ENCODE measurements at regions of chr1 and their contacts with region 1.

Region 1: DNA sequence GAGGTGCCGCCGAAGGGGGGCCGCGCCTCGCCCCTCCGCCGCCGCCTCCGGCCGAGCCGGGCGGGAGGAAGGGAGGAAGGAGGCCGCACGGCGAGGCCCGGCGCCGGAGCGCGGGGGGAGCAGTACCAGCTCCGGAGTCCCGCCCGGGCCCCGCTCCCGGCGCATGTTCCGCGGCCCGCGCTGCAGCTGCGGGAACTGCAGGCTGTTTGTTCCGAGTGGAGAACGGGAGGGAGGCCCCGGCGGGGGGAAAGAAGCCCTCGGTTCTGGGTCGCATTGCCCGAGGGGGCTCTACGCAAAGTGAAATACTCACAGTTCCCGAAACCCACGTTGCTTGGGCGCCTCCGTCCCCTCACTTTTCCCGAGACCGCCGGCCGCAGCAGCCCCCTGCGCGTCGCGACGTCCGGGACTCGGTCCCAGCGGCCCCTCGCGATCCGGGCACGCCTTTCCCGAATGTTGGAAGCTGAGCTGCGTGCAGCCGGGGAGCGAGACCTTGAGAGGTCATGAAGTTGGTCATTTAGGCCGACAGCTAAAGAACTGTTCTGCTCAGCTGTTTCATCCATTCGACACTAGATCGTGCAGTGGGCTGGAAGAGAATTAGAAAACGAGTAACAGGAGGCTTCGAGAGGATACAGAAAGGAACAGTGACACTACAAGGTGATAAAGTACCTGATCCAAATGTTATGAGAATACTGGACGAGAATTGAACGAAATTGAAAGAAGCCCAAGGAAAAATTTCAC is 521 bp upstream of the LIN9 start:
- DNase-seq: no peak
- H3K4me3 Mint-ChIP-seq: peak overlapping the region; percentile 75
- H3K27ac Mint-ChIP-seq: peak overlapping the region; percentile 83
- H3K4me1 Mint-ChIP-seq: peaks cover 32% of the 10 kb centered on the region
- H3K27me3 Mint-ChIP-seq: peaks cover 26% of the 10 kb centered on the region

Region 2: DNA sequence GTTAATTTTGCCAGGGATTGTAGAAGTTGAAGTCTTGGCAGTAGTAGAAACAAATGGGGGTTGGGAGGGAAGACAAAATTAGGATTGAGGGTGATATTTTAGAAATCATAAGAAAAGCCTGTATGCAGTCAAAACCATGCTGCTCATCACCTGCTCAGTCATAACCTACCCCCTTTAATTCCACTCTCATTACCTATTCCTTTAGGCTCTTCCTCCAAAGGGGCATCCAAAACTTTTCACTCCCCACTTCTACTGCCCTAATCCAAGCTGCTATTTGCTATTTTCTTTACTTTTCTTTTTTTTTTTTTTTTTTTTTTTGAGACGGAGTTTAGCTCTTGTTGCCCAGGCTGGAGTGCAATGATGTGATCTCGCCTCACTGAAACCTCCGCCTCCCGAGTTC is 235.4 kb before region 1 on chr1:
- CTCF ChIA-PET with region 1: no interaction called
- POLR2A ChIA-PET with region 1: no interaction called
- DNase-seq: no peak
- H3K4me3 Mint-ChIP-seq: no peak overlapping the region
- H3K27ac Mint-ChIP-seq: no peak overlapping the region
- H3K4me1 Mint-ChIP-seq: peaks cover 11% of the 10 kb centered on the region
- H3K27me3 Mint-ChIP-seq: no peaks in the 10 kb centered on the region

Region 3: GRCh38 chr1:226296911-226297310 is 12.6 kb before region 1 on chr1:
- CTCF ChIA-PET with region 1: interaction called, 10 read pairs
- POLR2A ChIA-PET with region 1: no interaction called
- DNase-seq: no peak
- H3K4me3 Mint-ChIP-seq: no peak overlapping the region
- H3K27ac Mint-ChIP-seq: no peak overlapping the region
- H3K4me1 Mint-ChIP-seq: peaks cover 2% of the 10 kb centered on the region
- H3K27me3 Mint-ChIP-seq: no peaks in the 10 kb centered on the region

Region 4: DNA sequence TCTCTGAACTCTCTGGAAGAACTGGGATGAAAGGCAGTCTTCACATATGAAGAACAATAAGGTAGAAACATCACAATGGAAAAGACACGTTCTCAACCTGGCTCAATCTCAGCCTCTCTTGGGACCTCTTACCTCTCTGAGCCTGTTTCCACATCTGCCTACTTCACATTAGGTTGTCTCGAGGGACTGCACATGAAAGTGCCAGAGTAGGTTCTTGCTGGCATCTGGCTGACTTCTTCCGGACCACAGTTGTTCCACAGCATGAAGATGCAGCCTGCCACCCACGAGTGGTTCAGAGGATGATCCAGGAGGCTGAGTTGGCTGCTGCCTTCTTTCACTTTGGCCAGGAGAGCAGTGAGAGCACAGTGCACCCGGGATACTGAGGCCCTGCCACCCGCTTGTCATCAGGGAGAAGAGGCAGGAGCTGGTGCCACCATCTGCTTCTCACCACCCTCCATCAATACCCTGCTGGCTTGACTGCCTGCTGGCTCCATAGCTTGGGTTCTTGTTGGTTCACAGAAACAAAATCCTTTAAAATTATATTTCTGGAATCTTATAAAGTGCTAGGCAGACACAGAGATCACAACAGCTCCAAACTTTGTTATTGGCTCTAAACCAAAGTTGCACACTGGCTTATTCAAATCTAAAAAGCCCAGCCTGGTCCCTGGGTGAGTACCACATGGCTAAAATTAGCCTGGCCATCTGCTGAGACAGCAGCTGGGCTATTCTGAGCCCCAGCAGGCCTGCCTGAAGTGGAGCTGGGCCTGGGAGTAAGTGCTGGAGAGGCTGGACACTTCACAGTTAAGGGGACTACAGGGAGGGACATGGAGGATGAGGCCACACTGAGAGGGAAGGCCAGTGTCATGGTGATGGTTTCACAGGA is 46.4 kb after region 1 on chr1:
- CTCF ChIA-PET with region 1: no interaction called
- POLR2A ChIA-PET with region 1: no interaction called
- DNase-seq: no peak
- H3K4me3 Mint-ChIP-seq: no peak overlapping the region
- H3K27ac Mint-ChIP-seq: no peak overlapping the region
- H3K4me1 Mint-ChIP-seq: no peaks in the 10 kb centered on the region
- H3K27me3 Mint-ChIP-seq: no peaks in the 10 kb centered on the region

Region 5: GRCh38 chr1:226438007-226438406 is 128.5 kb after region 1 on chr1:
- CTCF ChIA-PET with region 1: no interaction called
- POLR2A ChIA-PET with region 1: no interaction called
- DNase-seq: no peak
- H3K4me3 Mint-ChIP-seq: no peak overlapping the region
- H3K27ac Mint-ChIP-seq: no peak overlapping the region
- H3K4me1 Mint-ChIP-seq: peaks cover 1% of the 10 kb centered on the region
- H3K27me3 Mint-ChIP-seq: peaks cover 39% of the 10 kb centered on the region